ENCODE measurements at regions of chrX and their contacts with region 1.

Region 1: GRCh38 chrX:111262096-111262495 is 8.2 kb downstream of the CAPN6 start:
- DNase-seq: no peak
- ATAC-seq: no peak

Region 2: GRCh38 chrX:111445486-111445885 is 183.4 kb after region 1 on chrX:
- intact Hi-C with region 1: loop called (anchors 10 kb)
- DNase-seq: no peak
- ATAC-seq: no peak

Measured in left ventricle myocardium superior (tissue), 1 donor.